Posterior vena cava (tissue), 2 donors: ENCODE measurements at regions of chr15 and their contacts with region 1.

Region 1: DNA sequence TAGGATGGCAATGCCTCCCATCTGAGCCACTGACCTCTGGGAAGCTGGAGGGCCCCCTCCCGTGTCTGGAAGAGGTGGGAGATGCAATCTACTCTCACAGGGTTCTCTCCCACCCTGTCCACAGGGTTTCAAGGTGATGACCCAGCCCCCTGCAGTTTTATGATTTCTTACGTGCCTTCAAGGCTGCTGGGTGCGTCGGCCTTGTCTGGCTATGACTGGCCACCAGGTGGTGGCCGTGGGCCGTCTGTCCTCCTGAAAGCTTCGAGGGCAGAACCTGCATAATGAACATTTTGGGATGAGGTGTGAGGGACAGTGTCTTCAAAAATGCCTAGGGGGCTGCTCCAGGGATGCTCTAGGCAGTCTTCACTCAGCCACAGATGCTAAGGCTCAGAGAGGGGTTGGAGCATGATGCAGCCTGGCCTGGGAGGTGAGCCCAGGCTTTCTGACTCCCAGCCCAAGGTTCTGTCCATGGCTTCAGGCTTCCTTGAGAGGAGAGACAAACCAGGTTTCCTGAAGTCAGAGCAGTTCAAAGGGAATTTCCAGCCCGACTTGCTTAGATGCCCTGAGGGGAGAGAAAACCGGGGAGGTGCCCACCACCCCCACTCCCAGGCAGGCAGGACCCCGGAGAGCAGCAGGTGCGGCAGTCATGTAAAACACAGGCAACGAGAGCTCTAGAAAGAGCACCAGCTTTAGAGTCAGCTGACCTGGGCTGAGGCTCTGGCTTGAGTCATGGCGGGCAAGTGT is 18.7 kb downstream of the ISG20 start:
- DNase-seq: peak; percentile 83

Region 2: GRCh38 chr15:87793725-87794124 is 863.8 kb before region 1 on chr15:
- intact Hi-C with region 1: no loop called
- DNase-seq: no peak

Region 3: DNA sequence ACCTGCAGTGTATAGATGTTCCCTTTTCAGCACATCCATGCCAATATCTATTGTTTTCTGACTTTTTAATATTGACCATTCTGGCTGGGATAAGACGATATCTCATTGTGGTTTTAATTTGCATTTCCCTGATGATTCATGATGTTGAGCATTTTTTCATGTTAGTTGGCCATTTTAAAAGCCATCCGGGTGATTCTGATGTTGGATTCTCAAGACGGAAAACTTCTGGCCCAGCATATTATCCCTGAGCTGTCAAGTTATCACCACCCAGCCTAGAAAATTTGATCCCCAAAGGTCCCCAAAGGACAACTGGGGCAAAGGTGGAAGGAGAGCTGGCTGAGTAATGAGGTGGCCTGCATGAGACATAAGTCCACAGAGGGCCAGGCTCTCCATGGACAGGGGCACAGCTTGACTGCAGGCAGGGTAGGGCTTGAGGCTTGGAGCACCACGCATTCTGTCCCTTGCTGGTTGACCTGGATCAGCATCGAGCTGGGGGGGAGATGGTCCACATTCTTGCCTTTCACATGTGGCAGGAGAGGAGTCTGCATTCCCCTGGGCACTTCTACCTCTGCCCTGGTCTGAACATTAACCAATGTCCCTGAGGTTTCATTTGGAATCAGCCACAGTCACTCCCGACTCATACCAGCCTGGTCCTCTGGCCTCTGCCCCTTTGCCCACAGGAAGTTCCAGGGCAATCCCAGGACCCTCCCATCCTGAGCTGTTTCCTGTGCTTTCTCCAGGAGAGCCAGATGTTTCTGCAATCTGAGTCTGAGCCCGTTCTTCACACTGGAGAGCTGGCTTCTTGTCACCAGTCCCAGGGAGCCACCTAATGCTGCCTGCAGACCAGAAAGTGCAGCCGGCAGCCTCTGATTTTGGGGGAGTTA is 50.5 kb after region 1 on chr15:
- intact Hi-C with region 1: loop called in 1 of 2 experiments (anchors 1 kb)
- DNase-seq: no peak

Region 4: DNA sequence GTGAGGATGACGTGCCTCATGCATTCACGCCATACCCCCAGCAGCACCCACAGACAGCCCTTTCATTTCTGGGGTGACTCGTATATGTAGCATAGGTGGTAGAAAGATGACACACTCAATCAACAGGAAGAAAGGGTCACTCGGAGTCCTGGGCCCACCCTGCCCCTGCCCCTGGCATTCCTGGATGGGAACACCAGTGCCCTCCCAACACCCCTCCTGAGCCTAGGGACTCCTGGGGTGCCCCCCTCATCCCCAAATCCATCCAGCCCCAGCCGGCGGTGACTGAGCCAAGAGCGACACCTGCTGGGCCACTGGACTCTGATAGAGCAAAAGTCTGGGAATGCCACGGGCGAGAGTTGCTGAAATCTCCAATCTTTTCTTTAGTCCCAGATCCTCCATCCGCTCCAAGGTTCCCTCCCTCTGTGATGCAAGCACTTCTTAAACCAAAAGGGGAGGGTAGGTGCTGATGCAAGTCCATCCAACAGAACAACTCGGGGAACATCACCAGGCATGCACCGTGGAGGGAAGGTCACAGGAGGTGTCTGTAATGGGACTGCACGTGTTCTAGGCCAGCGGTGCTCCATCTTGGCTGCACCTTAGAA is 176.8 kb after region 1 on chr15:
- intact Hi-C with region 1: loop called (anchors 2 to 5 kb)
- DNase-seq: no peak